T-cell (primary cell): ENCODE measurements at regions of chr10 and their contacts with region 1.

Region 1: DNA sequence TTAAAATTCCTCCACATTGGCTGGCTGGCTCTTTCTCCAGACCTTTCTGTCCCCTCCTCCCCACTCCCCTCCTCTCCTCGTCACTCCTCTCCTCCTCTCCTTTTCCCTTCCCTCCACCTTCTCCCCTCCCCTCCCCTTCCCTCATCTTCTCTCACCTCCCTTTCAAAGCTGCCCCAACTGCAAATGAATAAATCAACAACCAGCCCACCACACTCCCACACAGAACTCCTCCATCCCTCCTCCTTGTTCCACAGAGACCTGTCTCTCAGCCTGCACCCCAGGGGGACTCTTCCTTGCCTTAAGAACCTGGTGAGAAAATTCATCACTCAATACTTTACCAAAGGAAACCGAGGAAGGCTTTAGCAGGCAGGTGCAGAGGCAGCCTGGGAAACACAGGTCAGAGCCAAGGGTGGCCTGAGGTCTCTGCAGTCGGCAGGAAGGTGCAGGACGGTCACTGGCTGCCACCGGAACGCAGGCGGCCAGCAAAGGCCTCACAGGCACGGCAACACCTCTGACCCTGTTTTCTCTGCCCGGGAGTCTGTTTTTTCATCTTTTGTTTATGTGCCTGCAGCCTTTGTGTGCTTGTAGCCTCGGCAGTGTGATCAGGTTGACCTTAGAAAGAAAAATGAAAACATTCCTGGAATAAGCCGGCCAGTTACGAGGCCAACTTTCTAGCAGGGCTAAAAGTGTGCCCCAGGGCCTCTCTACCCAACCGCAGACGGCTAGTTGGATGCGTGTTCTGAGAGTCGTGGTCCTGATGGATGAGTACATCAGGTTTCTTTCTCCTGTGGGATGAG is 207.6 kb upstream of the KLF6 start:
- DNase-seq: no peak
- ATAC-seq: no peak
- H3K4me3 ChIP-seq: no peak overlapping the region
- H3K4me3 Mint-ChIP-seq: no peak overlapping the region
- H3K27ac ChIP-seq: no peak overlapping the region
- H3K27ac Mint-ChIP-seq: no peak overlapping the region
- H3K4me1 ChIP-seq: no peaks in the 10 kb centered on the region
- H3K4me1 Mint-ChIP-seq: peaks cover 5 to 13% (median 5%) of the 10 kb centered on the region in 3 donors
- H3K27me3 ChIP-seq: no peaks in the 10 kb centered on the region
- H3K27me3 Mint-ChIP-seq: no peaks in the 10 kb centered on the region

Region 2: DNA sequence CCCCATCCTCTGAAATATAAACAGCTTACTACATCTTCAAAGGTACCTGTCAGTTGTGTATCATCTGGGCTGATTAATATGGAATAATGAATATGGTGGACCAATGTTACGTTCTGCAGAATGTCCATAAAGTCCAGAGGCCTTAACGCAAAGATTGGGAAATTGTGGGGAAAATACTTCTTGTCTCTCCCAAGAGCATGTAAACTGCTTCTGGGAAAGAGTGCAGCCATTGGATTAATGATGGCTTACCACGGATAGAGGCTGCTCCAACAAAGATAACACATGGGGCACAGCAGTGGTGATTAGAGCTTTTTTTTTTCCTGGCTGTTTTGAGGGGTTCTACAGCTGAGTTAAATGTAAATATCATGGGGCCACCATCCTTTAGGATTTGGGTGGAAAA is 493.1 kb after region 1 on chr10:
- CTCF ChIA-PET with region 1: interaction called in 1 of 2 experiments, 10 read pairs
- POLR2A ChIA-PET with region 1: no interaction called
- DNase-seq: no peak
- ATAC-seq: no peak
- H3K4me3 ChIP-seq: no peak overlapping the region
- H3K4me3 Mint-ChIP-seq: no peak overlapping the region
- H3K27ac ChIP-seq: no peak overlapping the region
- H3K27ac Mint-ChIP-seq: no peak overlapping the region
- H3K4me1 ChIP-seq: no peaks in the 10 kb centered on the region
- H3K4me1 Mint-ChIP-seq: no peaks in the 10 kb centered on the region
- H3K27me3 ChIP-seq: peaks cover 0 to 2% of the 10 kb centered on the region in 2 experiments
- H3K27me3 Mint-ChIP-seq: peaks cover 0 to 6% of the 10 kb centered on the region in 2 donors